ENCODE measurements at regions of chr10 and their contacts with region 1.

Region 1: GRCh38 chr10:107814865-107815487 is 650.5 kb upstream of the SORCS1 start:
- DNase-seq: no peak
- ATAC-seq: no peak

Region 2: DNA sequence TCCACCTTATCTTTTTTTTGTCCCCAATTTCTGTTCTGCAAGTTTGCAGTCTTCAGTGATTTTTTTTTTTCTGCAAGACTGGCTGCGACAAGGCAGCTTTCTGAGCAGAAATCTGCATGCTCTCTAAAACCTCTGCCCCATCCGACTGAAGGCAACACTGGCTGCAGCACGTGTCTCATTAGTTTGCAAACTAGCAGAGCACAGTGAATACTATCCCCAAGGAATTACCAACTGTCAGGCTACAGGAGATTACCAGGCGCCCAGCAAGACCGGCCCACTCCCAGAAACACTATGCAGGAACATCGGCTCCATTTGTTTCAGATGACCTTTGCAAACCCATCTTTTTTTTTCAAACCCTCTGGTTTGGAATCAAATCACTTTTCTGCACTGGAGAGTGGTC is 1189.2 kb before region 1 on chr10:
- intact Hi-C with region 1: loop called (anchors 10 kb)
- DNase-seq: no peak
- ATAC-seq: no peak

Region 3: GRCh38 chr10:106705681-106706100 is 1109.3 kb before region 1 on chr10:
- intact Hi-C with region 1: loop called (anchors 2 kb)
- DNase-seq: no peak
- ATAC-seq: peak; percentile 64

Region 4: DNA sequence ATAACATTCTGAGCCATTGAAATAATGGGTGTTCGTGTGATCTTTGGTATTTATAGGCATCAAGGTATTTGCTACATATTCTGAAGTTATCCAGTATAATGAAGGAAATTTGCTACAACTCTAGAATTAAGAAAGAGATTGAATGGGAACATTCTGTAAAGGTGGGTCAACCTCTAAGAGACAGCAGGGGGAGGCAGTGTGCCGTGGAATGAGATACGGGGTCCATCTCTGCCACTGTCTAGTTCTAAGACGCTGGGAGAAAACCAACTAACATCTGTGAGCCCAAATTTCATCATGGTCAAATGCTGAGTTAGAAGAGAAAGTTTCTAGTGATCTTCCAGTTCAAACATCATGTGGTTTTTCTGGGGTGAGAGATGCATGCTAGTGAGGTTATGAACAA is 1019.4 kb before region 1 on chr10:
- intact Hi-C with region 1: loop called (anchors 10 kb)
- DNase-seq: no peak
- ATAC-seq: peak; percentile 72

Region 5: GRCh38 chr10:107409522-107409921 is 405.5 kb before region 1 on chr10:
- intact Hi-C with region 1: loop called (anchors 10 kb)
- DNase-seq: no peak
- ATAC-seq: no peak

Region 6: DNA sequence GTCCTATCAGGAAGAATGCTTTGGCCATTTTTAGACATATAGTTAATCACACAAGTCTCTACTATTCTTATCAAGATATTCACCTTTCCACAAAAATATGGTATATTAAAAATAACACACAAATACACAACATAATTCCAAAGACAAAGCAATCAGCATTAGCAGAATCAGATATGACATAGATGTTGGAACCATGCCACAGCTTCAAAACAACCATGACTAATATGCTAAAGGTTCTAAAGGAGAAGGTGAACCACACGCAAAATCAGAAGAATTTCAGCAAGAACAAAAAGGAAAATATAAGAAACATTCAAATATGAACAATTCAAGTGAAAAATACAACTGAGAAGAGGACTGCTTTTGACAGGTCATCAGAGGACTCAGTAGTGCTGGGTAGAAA is 19.7 kb after region 1 on chr10:
- intact Hi-C with region 1: no loop called
- DNase-seq: no peak
- ATAC-seq: no peak